GM10248 (cell line): ENCODE measurements at regions of chrX and their contacts with region 1.

Region 1: GRCh38 chrX:68732906-68733493 is 85.5 kb downstream of the STARD8 start:
- DNase-seq: peak; percentile 68
- CTCF ChIP-seq: peak; percentile 51

Region 2: GRCh38 chrX:68719904-68720614 is 12.9 kb before region 1 on chrX:
- CTCF ChIA-PET with region 1: interaction called, 10 read pairs
- POLR2A ChIA-PET with region 1: no interaction called
- DNase-seq: no peak
- CTCF ChIP-seq: no peak

Region 3: GRCh38 chrX:68807818-68808217 is 74.8 kb after region 1 on chrX:
- CTCF ChIA-PET with region 1: interaction called, 24 read pairs
- POLR2A ChIA-PET with region 1: no interaction called
- DNase-seq: no peak
- CTCF ChIP-seq: no peak